GM10248 (cell line): ENCODE measurements at regions of chr2 and their contacts with region 1.

Region 1: GRCh38 chr2:162153608-162154224 is 1.7 kb upstream of the GCG start:
- DNase-seq: peak; percentile 36
- CTCF ChIP-seq: peak; percentile 84

Region 2: GRCh38 chr2:160596441-160596840 is 1557.3 kb before region 1 on chr2:
- CTCF ChIA-PET with region 1: no interaction called
- POLR2A ChIA-PET with region 1: no interaction called
- DNase-seq: no peak
- CTCF ChIP-seq: no peak

Region 3: DNA sequence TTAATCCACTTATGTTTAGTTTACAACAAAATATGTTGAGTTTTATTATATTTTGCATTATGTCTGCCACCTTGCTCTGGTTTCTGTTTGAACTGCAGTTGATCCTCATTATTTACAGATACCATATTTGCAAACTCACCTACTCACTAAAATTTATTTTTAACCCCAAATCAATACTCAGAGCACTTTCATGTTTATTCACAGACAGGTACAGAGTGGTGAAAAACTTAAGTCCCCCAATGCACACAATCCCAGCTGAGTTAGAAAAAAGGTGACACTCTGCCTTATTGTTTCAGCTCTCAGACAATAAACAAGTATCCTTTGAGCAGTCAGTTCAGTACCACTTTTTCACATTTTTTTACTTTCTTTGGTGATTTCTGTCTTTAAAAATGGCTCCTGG is 15.4 kb before region 1 on chr2:
- CTCF ChIA-PET with region 1: interaction called, 42 read pairs
- POLR2A ChIA-PET with region 1: no interaction called
- DNase-seq: no peak
- CTCF ChIP-seq: no peak

Region 4: DNA sequence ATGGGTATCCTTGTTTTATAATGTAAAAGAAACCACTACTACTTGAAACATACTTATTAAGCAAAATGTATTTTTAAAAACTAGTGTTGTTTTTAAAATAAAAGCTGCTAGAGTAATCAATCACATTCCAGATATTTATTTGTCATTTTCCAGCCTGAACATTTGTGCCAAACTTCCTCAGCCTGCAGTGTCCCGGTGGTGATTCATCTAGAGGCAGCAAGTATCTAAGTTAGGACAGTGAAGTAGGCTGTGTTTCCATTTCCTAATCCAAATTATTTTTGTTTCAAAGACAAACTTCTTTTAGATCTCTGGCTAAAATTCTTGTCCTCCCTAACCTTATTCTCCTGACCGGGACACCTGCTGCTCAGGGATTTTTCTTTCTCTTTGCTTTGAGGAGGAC is 11.1 kb after region 1 on chr2:
- CTCF ChIA-PET with region 1: interaction called, 21 read pairs
- POLR2A ChIA-PET with region 1: no interaction called
- DNase-seq: no peak
- CTCF ChIP-seq: no peak